ENCODE measurements at regions of chr12 and their contacts with region 1.

Region 1: GRCh38 chr12:110619534-110619953 is 5.6 kb downstream of the TCTN1 start:
- DNase-seq: peak; percentile 74
- H3K4me3 Mint-ChIP-seq: no peak overlapping the region
- H3K27ac Mint-ChIP-seq: peak overlapping the region; percentile 79
- H3K4me1 Mint-ChIP-seq: peaks cover 21% of the 10 kb centered on the region
- H3K27me3 Mint-ChIP-seq: no peaks in the 10 kb centered on the region

Region 2: GRCh38 chr12:110583137-110584059 is 36.1 kb before region 1 on chr12 and contains the start of gene PPTC7:
- CTCF ChIA-PET with region 1: no interaction called
- intact Hi-C with region 1: loop called (anchors 1 kb)
- DNase-seq: peak; percentile 99
- H3K4me3 Mint-ChIP-seq: peak within 1 kb of the TSS; percentile 90
- H3K27ac Mint-ChIP-seq: peak within 1 kb of the TSS; percentile 98
- H3K4me1 Mint-ChIP-seq: peaks cover 59% of the 10 kb centered on the region
- H3K27me3 Mint-ChIP-seq: no peaks in the 10 kb centered on the region
- total RNA-seq, gene PPTC7: 41.1 to 43.2 TPM

Region 3: GRCh38 chr12:110689281-110690126 is 70.0 kb after region 1 on chr12:
- CTCF ChIA-PET with region 1: interaction called, 4 read pairs
- intact Hi-C with region 1: loop called (anchors 1 kb)
- DNase-seq: peak; percentile 69
- H3K4me3 Mint-ChIP-seq: peak overlapping the region; percentile 80
- H3K27ac Mint-ChIP-seq: peak overlapping the region; percentile 39
- H3K4me1 Mint-ChIP-seq: peaks cover 38% of the 10 kb centered on the region
- H3K27me3 Mint-ChIP-seq: no peaks in the 10 kb centered on the region

Region 4: DNA sequence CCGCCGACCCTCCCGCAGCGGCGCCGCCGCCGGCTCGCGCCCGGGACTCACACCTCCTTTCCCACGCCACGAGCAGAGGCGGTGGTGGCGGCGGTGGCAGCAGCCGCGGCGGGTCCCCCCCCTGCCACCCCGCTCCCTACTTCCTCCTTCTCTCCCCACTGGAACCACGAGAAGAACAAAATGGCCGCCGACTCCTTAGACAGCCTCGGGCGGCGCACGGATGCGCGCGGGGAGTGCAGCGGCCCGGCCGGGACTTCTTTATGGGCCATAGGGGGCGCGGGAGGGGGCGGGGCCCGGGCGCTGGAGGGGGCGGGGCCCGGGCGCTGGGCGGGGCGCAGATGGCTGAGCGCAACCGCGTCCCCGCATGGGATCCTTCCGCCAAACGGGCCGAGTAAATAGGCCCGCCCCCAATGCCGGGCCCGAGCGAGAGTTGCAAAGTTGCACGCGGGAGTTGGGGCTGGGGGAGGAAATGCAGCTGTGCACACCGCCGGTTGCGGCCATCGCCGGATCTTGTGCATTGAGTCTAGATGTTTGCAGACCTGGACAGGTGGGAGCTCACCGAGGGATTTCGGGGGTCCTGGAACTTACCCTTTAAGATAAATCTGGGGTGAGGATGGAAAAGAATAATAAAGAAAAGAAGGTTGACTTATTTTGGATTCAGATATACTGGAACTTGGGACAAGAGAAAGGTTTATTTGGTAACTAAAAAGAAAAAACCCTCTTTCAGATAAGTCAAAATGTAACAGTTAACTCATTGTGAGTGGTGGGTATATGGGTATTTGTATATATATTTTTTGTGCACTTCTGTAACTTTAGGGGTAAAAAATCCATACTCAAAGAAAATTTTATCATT is 123.4 kb after region 1 on chr12 and contains the start of gene PPP1CC:
- CTCF ChIA-PET with region 1: interaction called, 5 read pairs
- intact Hi-C with region 1: loop called (anchors 1 kb)
- DNase-seq: peak; percentile 93
- H3K4me3 Mint-ChIP-seq: peak within 1 kb of the TSS; percentile 99
- H3K27ac Mint-ChIP-seq: peak within 1 kb of the TSS; percentile 98
- H3K4me1 Mint-ChIP-seq: peaks cover 37% of the 10 kb centered on the region
- H3K27me3 Mint-ChIP-seq: no peaks in the 10 kb centered on the region
- total RNA-seq, gene PPP1CC: 280 to 285 TPM

Region 5: GRCh38 chr12:110826592-110827200 is 207.2 kb after region 1 on chr12:
- CTCF ChIA-PET with region 1: interaction called, 6 read pairs
- intact Hi-C with region 1: loop called (anchors 1 kb)
- DNase-seq: peak; percentile 97
- H3K4me3 Mint-ChIP-seq: peak overlapping the region; percentile 7
- H3K27ac Mint-ChIP-seq: peak overlapping the region; percentile 50
- H3K4me1 Mint-ChIP-seq: peaks cover 15% of the 10 kb centered on the region
- H3K27me3 Mint-ChIP-seq: no peaks in the 10 kb centered on the region